Panc1 (cell line): ENCODE measurements at regions of chr17 and their contacts with region 1.

Region 1: DNA sequence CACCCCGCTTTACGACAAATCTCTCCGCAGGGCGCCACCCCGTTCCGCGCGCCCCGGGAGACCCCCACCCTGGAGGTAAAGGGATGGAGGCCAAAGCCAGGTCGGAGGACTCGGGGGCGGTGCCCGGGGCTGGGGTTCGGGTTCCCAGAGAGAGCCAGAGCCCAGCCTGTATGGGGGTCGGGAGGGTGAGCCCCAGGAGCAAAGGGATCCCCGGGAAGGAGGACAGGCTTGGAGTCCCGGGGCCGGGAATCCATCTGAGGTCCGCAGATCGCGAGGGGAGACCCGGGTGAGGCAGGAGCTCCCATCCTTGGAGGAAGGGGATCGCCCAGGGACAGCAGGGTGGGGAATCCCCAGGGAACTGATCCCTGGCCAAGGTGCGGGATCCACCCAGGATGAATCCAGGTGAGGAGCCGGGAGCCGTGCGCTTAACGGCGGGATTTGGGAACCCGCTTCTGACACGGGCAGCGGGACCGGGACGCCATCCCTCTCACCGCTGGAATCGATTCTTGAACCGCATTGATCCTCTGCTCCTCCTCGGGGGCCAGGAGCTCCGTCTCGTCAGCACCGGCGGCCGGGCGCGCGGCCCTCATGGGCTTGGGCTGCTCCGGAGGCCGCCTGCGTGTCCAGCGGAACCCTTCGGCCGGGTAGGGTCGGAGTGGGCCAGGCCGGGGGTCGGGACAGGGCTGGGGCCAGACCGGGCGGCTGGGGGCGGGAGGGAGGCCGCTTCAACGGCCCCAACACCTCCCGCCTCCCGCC is at the start of gene MMD:
- DNase-seq: no peak
- ATAC-seq: peak; percentile 66
- H3K4me3 ChIP-seq: peak within 1 kb of the TSS; percentile 82 to 91
- H3K27ac ChIP-seq: peak within 1 kb of the TSS; percentile 79
- H3K4me1 ChIP-seq: peaks cover 13% of the 10 kb centered on the region
- H3K27me3 ChIP-seq: peaks cover 19% of the 10 kb centered on the region
- CTCF ChIP-seq: no peak
- total RNA-seq, gene MMD: 26.9 TPM

Region 2: DNA sequence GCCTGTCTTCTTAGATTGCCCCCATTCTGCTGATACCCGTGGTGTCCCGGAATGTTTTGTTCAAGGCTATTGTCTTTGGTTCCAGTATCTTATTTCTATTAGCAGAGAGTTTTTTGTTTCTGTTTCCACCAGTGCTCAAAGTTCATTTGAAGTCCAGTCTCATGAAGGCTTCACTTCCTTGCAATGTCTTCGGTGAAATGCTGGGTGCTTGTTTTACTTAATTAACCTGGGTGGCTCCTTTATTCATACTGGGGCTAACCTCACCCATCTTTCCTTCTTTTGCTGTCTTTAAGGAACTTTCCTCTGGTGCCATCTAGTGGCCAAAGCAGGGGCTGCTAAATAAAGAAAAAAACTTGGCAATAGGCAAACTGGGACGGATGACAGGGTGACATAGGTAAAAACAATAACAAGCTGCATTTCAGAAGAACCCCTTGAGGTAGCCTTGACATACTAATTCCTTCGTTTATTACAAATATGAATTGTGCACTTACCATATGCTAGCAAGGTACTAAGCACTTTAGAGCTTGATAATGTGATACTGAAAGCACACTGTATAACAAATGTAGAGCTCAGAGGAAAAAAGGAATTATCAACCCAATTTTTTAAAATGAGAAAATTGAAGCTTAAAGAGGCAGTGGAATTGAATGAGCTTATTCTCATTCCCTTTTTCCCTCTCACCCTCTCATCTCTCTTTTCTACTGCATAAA is 92.7 kb after region 1 on chr17:
- CTCF ChIA-PET with region 1: no interaction called
- POLR2A ChIA-PET with region 1: no interaction called
- in situ Hi-C with region 1: no loop called
- intact Hi-C with region 1: loop called (anchors 5 kb)
- DNase-seq: peak; percentile 58
- ATAC-seq: peak; percentile 87
- H3K4me3 ChIP-seq: no peak overlapping the region
- H3K27ac ChIP-seq: no peak overlapping the region
- H3K4me1 ChIP-seq: no peaks in the 10 kb centered on the region
- H3K27me3 ChIP-seq: peaks cover 17% of the 10 kb centered on the region
- CTCF ChIP-seq: peak; percentile 91

Region 3: DNA sequence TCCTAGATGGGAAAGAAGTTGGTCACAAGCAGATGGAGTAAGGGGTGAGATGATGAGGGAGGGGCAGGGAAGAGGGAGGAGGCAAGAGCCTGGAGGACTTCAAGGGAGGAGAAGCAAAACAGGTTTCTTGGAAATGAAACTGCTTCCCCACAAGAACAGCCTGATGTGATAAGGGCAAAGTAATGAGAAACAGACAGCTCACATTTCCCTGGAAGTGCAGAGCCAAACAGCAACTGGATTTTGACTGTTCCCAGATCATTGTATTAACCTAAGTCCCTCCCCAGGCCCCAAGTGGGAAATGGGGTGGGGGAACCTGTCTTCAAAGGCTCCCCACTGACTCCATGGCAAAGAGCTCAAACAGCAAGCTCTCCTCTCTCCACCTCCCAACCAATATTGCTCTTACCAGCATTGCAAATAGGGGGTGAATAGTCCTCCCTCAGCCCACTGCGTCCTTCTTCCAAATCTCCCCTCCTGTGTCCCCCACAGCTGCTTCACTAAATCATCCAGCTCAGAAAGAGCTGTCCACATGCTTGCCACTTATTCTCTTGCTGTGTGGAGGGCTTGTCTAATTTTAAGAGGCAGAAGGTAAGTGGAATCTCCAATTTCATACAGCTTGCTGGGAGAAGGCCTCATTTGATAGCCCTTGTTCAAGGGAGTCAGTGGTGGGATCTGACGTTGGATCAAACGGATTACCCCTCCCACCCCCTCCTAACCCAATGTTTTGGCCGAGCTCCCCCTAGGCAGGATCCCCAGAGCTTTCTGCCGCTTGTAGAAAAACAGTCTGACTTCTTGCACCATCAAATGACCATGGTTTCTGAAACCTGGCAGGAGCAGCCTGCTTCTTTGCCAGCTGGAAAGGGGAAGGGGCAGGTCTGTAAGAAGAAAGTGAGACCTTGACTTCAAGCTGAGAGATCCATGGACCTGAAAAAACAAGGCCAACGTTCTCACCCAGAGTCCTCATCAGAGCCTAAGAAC is 146.2 kb after region 1 on chr17:
- CTCF ChIA-PET with region 1: no interaction called
- POLR2A ChIA-PET with region 1: no interaction called
- in situ Hi-C with region 1: no loop called
- intact Hi-C with region 1: no loop called
- DNase-seq: no peak
- ATAC-seq: no peak
- H3K4me3 ChIP-seq: no peak overlapping the region
- H3K27ac ChIP-seq: no peak overlapping the region
- H3K4me1 ChIP-seq: no peaks in the 10 kb centered on the region
- H3K27me3 ChIP-seq: no peaks in the 10 kb centered on the region
- CTCF ChIP-seq: no peak